Right cardiac atrium (tissue), 5 donors: ENCODE measurements at regions of chr1 and their contacts with region 1.

Region 1: GRCh38 chr1:222634180-222635013 is 16.5 kb downstream of the MIA3 start:
- DNase-seq: peak in 1 of 3 donors; percentile 32
- ATAC-seq: peak; percentile 68 to 78
- H3K4me3 ChIP-seq: no peak overlapping the region
- H3K27ac ChIP-seq: no peak overlapping the region
- H3K4me1 ChIP-seq: no peaks in the 10 kb centered on the region
- H3K27me3 ChIP-seq: no peaks in the 10 kb centered on the region

Region 2: DNA sequence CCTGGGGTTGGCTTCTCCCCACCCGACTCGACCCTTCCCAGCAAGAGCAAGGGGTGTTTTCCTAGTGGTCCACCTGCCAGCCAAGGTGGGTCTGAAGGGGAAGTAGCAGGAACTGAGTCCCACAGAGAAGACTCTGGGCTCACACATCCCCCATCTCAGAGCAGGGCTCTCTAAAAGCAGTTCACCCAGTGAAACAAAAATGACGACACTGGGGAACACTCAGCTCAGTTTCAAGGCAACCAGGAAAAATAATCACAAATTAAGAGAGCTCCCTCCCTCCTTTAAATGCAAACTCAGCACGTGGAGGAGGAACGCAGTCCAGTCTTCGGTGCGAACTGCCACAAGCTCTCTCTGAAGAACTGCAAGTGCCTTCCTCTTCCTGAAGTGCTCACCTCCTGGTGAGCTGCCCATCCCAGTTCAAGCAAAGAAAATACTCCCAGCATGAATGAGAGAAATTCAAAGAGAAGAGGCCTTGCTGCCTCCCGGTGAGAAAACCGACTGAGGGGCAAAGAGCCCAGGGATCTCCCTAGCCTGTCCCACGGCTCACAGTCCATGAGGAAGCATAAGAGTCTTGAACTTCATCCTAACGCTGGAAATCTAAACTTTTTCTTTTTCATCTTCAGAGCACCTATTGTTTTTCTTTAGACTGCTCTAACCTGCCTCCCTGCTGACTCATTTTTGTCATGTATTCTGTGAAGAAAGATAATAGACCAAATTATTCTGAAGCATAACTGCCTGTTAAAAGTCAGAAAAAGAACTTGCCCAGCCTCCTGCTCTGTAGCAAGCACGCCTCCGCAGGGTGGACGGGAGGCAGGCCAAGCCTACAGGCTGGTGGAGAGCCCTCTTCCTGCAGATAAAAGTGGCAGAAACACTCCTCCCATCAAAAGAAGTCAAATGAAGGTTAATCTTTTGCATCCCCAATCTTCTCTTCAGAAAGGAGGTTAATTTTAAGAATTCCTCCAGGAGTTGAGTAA is 367.9 kb before region 1 on chr1:
- intact Hi-C with region 1: no loop called
- DNase-seq: no peak
- ATAC-seq: no peak
- H3K4me3 ChIP-seq: no peak overlapping the region
- H3K27ac ChIP-seq: no peak overlapping the region
- H3K4me1 ChIP-seq: no peaks in the 10 kb centered on the region
- H3K27me3 ChIP-seq: no peaks in the 10 kb centered on the region

Region 3: GRCh38 chr1:222465211-222466041 is 169.0 kb before region 1 on chr1:
- intact Hi-C with region 1: loop called (anchors 2 to 5 kb)
- DNase-seq: peak; percentile 94 to 98 (median 96)
- ATAC-seq: peak; percentile 100
- H3K4me3 ChIP-seq: peak overlapping the region; percentile 22
- H3K27ac ChIP-seq: peak overlapping the region; percentile 49
- H3K4me1 ChIP-seq: no peaks in the 10 kb centered on the region
- H3K27me3 ChIP-seq: no peaks in the 10 kb centered on the region